BJ (cell line): ENCODE measurements at regions of chr7 and their contacts with region 1.

Region 1: DNA sequence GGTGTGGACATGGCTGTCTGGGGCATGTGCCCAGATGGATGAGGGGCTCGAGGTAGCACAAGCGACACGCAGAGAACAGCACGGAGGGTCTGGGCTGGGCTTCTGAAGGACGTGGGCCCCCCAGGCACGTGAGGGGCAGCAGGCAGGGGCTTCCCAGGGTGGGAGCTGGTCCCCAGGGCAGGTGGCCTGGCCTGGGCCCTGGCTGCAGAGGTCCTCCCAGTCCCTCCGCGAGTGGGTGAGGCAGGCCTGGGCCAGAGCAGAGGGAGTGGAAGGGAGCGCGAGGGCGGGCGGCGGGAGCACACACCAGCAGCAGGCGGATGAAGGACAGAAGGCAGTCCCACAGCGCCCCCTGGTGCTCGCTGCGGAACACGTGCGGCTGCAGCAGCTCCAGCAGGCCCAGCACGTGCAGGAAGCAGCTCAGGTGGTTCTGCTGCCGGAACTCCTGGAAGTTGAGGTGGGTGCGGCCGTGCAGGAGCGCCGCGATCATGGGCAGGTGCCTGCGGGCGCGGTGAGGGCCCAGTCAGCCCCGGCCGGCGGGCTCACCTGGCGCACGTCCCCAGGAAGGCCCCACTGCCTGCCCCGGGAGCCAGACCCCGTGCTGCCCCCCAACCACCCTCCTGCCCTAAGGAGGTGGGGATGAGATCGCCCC is 14.7 kb upstream of the MICALL2 start:
- DNase-seq: no peak
- H3K4me3 ChIP-seq: no peak overlapping the region
- H3K27me3 ChIP-seq: no peaks in the 10 kb centered on the region
- CTCF ChIP-seq: peak; percentile 93

Region 2: DNA sequence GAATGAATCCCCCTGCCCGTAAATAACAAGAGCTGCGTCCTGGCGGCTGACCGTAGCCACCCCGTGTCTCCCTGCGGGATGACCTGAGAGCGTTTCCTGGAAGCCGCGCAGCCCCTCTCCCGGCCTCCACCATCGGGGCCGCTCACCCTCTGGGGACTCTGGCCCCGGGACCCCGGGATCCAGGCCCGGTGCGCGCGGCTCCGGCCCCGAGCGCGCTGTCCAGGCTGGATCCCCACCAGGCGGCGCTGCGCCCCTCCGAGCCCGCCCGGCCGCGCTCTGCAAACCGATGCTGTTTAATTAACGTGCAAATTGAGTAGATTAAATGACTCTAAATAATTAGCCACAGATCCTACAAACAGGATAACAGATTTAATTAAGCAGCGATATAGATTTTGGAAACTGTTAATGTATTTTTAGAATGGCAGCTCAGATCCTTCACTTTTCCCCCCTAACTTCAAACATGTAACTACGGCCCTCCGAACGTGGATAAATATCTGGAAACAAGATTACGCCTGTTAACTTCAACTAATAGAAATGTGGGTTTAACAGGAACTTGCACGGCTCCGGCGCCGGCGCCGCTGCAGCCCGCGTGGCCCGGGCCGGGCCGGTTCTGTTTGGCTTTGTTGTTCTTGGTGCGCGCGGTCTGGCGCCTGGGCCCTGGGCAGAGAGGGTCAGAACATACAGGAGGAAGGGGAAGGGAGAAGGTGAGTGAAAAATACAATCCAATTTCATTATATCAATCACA is 248.4 kb before region 1 on chr7:
- CTCF ChIA-PET with region 1: interaction called, 17 read pairs
- POLR2A ChIA-PET with region 1: no interaction called
- DNase-seq: no peak
- H3K4me3 ChIP-seq: no peak overlapping the region
- H3K27me3 ChIP-seq: peaks cover 54% of the 10 kb centered on the region
- CTCF ChIP-seq: peak; percentile 50

Region 3: GRCh38 chr7:1459522-1459892 is 14.5 kb before region 1 on chr7:
- CTCF ChIA-PET with region 1: interaction called, 31 read pairs
- POLR2A ChIA-PET with region 1: interaction called, 4 read pairs
- DNase-seq: peak; percentile 90
- H3K4me3 ChIP-seq: peak overlapping the region; percentile 92
- H3K27me3 ChIP-seq: no peaks in the 10 kb centered on the region
- CTCF ChIP-seq: no peak

Region 4: GRCh38 chr7:1484569-1484968 is 10.6 kb after region 1 on chr7:
- CTCF ChIA-PET with region 1: interaction called, 10 read pairs
- POLR2A ChIA-PET with region 1: no interaction called
- DNase-seq: no peak
- H3K4me3 ChIP-seq: no peak overlapping the region
- H3K27me3 ChIP-seq: no peaks in the 10 kb centered on the region
- CTCF ChIP-seq: no peak

Region 5: DNA sequence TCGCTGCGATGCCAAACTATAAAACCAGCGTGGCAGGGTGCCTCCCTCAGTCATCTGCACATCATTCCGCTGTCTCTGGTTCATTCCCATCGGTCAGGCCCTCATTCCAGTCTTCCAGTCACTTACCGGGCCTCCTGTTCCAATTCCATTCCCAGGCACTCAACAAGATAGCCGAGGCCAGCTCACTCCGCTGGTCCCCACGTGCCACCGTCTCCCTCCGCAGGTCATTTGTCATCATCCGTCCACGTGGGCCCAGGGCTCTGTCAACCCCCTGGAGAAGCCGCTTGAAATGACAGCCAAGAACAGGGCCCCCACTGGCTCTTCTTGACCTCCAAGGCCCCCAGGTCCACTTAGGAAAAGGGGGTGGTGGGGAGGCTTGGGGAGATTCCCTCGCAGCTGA is 88.2 kb after region 1 on chr7:
- CTCF ChIA-PET with region 1: no interaction called
- POLR2A ChIA-PET with region 1: no interaction called
- DNase-seq: no peak
- H3K4me3 ChIP-seq: no peak overlapping the region
- H3K27me3 ChIP-seq: no peaks in the 10 kb centered on the region
- CTCF ChIP-seq: no peak